ENCODE measurements at regions of chr12 and their contacts with region 1.

Region 1: DNA sequence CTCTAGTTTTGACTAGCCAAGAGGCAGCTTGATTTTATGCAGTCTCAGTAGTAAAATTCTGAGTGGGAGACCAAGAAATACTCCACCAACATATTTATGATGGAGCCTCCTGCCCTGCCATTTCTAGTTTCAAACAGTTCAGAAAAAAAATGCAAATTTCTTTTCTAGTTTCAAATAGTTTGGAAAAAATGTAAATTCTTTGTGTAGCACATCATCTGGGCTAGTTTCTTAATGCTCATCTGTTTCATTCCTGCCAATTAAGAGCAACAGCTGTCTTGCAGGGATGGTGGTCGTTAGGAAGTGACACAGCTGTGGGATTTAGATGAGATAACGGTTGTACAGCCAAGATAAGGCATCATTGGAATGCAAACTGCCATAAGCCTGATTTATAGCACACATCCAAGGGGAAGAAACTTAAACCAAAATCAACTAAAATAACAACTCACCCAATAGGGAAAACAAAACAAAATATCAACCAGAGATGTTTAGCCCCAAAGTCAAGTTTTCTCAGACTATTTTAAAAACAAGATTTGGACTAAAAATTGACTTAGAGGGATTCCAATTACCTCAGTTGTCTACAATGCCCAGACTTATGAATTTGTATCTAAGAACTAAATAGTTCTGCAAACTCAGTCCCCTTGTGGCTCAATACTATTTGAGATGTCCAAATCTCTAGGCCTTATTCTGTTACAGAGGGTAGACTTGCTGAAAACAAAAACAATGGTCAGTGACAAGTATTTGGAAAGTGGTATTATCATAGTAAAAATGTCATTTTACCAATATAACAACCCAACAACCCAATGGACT is 291.3 kb upstream of the ATP2B1 start:
- DNase-seq: no peak
- ATAC-seq: peak; percentile 65
- H3K4me3 ChIP-seq: no peak overlapping the region
- H3K27ac ChIP-seq: no peak overlapping the region
- H3K4me1 ChIP-seq: peaks cover 5% of the 10 kb centered on the region; the same call in 1 of the 2 replicates
- H3K27me3 ChIP-seq: no peaks in the 10 kb centered on the region
- CTCF ChIP-seq: no peak
- EP300 ChIP-seq: no peak
- POLR2A ChIP-seq: no peak
- RAD21 ChIP-seq: no peak

Region 2: DNA sequence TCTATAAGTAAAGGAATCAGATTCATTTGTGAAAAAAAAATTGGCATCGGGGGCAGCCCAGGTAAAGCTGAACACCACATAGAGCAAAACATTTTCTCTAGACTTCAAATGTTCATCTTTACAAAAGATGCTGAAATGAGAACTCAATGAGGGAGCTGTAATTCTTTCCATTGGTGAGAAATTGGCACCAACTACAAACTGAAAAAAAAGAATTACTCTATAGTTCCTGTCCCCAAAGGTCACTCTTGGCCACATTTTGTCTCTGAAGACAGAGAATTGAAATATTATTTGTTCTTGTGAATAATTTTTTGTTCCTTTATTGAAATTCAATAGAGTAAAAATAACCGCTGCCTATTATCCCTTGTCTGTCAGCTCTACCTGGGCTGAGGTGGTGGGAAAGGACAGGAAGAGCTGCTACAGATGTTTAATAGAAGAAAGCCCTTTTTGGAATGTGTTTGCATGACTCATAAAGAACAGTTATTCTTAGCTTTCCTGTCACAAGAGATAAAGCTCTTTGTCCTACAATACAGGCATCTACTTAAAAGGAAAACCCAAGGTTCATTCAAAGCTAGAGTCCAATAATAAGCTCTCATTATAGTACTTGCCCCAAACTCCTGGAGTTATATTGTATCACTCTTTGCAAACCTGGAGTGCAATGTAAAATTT is 1039.6 kb before region 1 on chr12:
- CTCF ChIA-PET with region 1: no interaction called
- POLR2A ChIA-PET with region 1: no interaction called
- RAD21 ChIA-PET with region 1: no interaction called
- SMC1A ChIA-PET with region 1: no interaction called
- in situ Hi-C with region 1: no loop called
- intact Hi-C with region 1: no loop called
- DNase-seq: no peak
- ATAC-seq: no peak
- H3K4me3 ChIP-seq: no peak overlapping the region
- H3K27ac ChIP-seq: no peak overlapping the region
- H3K4me1 ChIP-seq: no peaks in the 10 kb centered on the region
- H3K27me3 ChIP-seq: no peaks in the 10 kb centered on the region; a peak in 1 of 4 replicates
- CTCF ChIP-seq: no peak
- EP300 ChIP-seq: no peak
- POLR2A ChIP-seq: no peak
- RAD21 ChIP-seq: no peak

Region 3: DNA sequence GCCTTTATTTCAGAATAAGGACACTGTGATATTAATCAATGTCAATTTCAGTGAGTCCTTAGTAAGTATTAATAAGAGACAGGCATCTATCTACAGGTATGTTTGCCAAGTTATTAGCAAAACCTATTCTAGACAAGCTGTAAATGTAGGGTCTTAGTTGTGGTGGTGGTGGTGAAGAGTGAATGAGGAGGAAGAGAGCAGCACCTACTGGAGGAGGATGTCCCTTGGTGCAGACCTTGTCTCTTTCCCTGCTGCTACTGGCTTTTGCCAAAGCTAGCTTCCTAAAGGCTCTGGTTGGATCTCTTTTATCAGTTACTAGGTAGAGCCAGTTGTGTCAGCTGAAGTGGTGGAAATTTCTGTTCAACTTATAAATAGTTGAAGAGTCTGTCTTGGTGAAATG is 13.5 kb after region 1 on chr12:
- CTCF ChIA-PET with region 1: interaction called, 23 read pairs
- POLR2A ChIA-PET with region 1: interaction called, 3 read pairs
- RAD21 ChIA-PET with region 1: interaction called, 4 read pairs
- SMC1A ChIA-PET with region 1: interaction called, 12 read pairs
- in situ Hi-C with region 1: no loop called
- intact Hi-C with region 1: no loop called
- DNase-seq: peak; percentile 8
- ATAC-seq: peak; percentile 94
- H3K4me3 ChIP-seq: no peak overlapping the region
- H3K27ac ChIP-seq: no peak overlapping the region
- H3K4me1 ChIP-seq: no peaks in the 10 kb centered on the region
- H3K27me3 ChIP-seq: no peaks in the 10 kb centered on the region
- CTCF ChIP-seq: peak; percentile 45 to 73 (median 54); a peak in 5 of 6 replicates
- EP300 ChIP-seq: no peak
- POLR2A ChIP-seq: no peak
- RAD21 ChIP-seq: peak; percentile 60

Region 4: DNA sequence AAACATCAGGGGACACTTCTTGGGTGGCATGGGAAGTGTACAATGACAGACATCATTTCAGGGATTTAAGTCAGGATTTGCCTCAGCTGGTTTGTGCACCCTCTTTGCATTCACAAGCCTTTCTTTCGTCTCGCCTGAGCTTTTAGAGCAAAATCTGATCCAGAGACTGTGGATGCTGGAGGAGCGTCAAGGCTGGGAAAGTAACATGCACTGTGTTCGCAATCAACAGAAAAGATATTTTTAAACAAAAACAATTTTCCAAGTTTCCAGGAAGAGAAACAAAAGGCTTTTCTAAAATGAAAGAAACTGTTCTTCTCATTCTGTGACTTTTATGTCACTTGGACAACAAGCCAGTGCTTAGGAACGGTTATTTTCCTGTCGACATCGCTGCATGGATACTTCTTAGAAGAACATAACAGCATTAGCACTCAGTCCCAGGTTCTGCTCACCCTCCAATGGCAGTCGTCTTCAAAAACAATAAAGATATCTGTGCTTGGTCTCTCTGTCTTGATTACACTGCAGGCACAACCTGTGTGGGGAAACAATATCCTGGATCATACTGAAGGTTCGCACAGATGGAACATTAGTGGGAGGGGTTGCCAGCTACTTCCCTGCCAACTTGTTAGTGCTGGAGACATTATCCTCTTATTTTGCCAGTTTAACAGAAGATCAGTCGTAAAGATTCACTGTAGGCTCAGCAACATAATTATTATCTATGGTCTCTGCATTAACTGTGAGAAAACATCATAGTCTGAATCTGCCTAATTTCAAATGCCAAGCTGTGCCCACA is 112.1 kb after region 1 on chr12:
- CTCF ChIA-PET with region 1: no interaction called
- POLR2A ChIA-PET with region 1: no interaction called
- RAD21 ChIA-PET with region 1: no interaction called
- SMC1A ChIA-PET with region 1: no interaction called
- in situ Hi-C with region 1: no loop called
- intact Hi-C with region 1: no loop called
- DNase-seq: no peak
- ATAC-seq: no peak
- H3K4me3 ChIP-seq: no peak overlapping the region
- H3K27ac ChIP-seq: no peak overlapping the region
- H3K4me1 ChIP-seq: no peaks in the 10 kb centered on the region
- H3K27me3 ChIP-seq: no peaks in the 10 kb centered on the region
- CTCF ChIP-seq: no peak
- EP300 ChIP-seq: no peak
- POLR2A ChIP-seq: no peak
- RAD21 ChIP-seq: no peak